ENCODE measurements at regions of chr7 and their contacts with region 1.

Region 1: GRCh38 chr7:31134246-31135188 is 82.4 kb downstream of the ADCYAP1R1 start:
- DNase-seq: peak; percentile 23
- H3K4me3 ChIP-seq: no peak overlapping the region
- H3K27ac ChIP-seq: no peak overlapping the region
- H3K27me3 ChIP-seq: no peaks in the 10 kb centered on the region
- CTCF ChIP-seq: peak; percentile 72

Region 2: DNA sequence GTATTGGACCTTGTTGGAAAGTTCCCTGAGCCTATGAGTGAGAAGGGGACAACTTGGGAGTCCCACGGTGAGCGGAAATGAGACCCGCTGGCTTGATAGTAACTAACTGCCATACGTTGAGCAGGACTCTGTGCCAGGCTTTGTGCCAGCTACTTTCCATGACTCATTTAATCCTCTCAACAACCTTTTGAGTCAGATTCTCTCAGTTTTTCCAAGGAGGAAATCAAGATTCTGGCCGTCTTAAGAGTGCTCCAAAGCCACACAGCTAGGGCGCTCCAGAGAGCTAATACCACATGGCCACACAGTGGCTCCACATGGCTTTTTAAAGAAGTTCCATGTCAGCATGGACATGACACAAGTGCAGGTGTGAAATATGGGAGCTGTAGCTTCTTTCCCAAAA is 711.6 kb before region 1 on chr7:
- CTCF ChIA-PET with region 1: no interaction called
- POLR2A ChIA-PET with region 1: no interaction called
- DNase-seq: no peak
- H3K4me3 ChIP-seq: no peak overlapping the region
- H3K27ac ChIP-seq: no peak overlapping the region
- H3K27me3 ChIP-seq: no peaks in the 10 kb centered on the region
- CTCF ChIP-seq: no peak

Region 3: DNA sequence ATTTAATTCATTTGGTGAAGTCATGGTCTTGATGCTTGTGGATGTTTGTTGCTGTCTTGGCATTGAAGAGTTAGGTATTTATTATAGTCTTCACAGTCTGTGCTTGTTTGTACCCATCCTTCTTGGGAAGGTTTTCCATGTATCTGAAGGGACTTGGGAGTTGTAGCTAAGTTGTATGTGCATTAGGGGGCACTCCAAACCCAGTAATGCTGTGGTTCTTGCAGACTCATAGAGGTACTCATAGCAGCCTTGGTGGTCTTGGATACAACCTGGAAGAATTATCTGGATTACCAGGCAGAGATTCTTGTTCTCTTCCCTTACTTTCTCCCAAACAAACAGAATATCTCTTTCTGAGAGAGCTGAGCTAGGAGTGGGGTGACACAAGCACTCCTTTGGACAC is 10.8 kb after region 1 on chr7:
- CTCF ChIA-PET with region 1: interaction called, 15 read pairs
- POLR2A ChIA-PET with region 1: no interaction called
- DNase-seq: no peak
- H3K4me3 ChIP-seq: no peak overlapping the region
- H3K27ac ChIP-seq: no peak overlapping the region
- H3K27me3 ChIP-seq: no peaks in the 10 kb centered on the region
- CTCF ChIP-seq: no peak

Region 4: GRCh38 chr7:31413766-31414165 is 279.2 kb after region 1 on chr7:
- CTCF ChIA-PET with region 1: no interaction called
- POLR2A ChIA-PET with region 1: no interaction called
- DNase-seq: no peak
- H3K4me3 ChIP-seq: no peak overlapping the region
- H3K27ac ChIP-seq: no peak overlapping the region
- H3K27me3 ChIP-seq: no peaks in the 10 kb centered on the region
- CTCF ChIP-seq: no peak

Measured in AG04450 (cell line).